ENCODE measurements at regions of chr10 and their contacts with region 1.

Region 1: DNA sequence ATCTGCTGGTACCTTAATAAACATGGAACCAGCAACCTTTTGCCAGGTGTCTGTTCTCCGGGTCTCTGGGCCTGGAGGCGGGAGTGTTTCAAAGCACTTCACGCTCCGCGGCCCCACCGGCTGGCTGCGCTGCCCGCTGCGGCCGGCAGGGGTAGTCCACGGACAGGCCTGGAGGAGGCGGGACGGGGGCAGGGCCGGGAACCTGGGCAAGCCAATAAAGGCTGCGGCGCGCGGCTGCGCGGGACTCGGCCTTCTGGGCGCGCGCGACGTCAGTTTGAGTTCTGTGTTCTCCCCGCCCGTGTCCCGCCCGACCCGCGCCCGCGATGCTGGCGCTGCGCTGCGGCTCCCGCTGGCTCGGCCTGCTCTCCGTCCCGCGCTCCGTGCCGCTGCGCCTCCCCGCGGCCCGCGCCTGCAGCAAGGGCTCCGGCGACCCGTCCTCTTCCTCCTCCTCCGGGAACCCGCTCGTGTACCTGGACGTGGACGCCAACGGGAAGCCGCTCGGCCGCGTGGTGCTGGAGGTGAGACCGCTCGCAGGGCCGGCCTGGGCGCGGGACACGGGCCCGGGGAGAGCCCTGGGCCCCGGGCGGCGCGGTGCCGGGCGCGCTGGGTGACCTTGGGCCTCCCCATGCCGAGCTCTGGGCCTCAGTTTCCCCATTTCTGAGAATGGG is at the start of gene PPIF:
- DNase-seq: peak; percentile 65
- ATAC-seq: peak; percentile 87
- H3K4me3 ChIP-seq: peak within 1 kb of the TSS; percentile 84
- H3K27ac ChIP-seq: peak within 1 kb of the TSS; percentile 92
- H3K4me1 ChIP-seq: peaks cover 12% of the 10 kb centered on the region
- H3K27me3 ChIP-seq: no peaks in the 10 kb centered on the region
- CTCF ChIP-seq: peak; percentile 92 to 94 (median 93)
- EP300 ChIP-seq: no peak
- POLR2A ChIP-seq: peak; percentile 89
- RAD21 ChIP-seq: 0 out of 2 replicates have a peak, but pooled peaks have one; percentile 46
- polyA plus RNA-seq, gene PPIF: 28.8 to 71.9 TPM

Region 2: DNA sequence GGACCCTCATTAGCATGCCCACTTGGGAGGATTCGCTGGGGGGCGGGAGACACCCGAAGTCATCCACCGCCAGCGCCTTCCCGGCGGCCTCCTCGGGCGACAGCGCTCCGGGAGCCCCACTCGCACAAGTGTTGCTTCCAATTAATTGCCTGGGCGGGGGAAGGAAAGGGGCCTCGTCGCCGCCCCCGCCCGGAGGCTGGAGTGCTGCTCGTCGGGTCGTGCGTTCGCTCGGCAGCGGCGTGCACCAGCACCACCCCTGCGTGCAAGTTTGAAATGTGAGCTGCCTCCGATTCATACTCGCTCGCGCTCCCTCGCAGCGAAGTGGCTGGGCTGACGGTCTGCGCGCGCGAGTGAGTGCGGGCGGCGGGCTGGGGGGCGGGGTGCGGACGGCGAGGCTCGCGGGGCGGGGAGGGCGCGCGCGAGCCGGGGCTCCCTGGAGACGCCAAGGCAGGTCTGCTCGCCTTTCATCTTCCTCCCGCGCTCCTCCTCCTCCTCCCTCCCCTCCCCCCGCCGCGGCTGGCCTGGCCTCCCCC is 104.7 kb before region 1 on chr10:
- CTCF ChIA-PET with region 1: interaction called, 11 read pairs
- POLR2A ChIA-PET with region 1: interaction called, 7 read pairs
- RAD21 ChIA-PET with region 1: interaction called, 36 read pairs
- SMC1A ChIA-PET with region 1: interaction called, 10 read pairs
- in situ Hi-C with region 1: no loop called
- intact Hi-C with region 1: loop called (anchors 2 kb)
- DNase-seq: no peak
- ATAC-seq: peak; percentile 39
- H3K4me3 ChIP-seq: peak overlapping the region; percentile 90
- H3K27ac ChIP-seq: peak overlapping the region; percentile 75
- H3K4me1 ChIP-seq: peaks cover 40% of the 10 kb centered on the region
- H3K27me3 ChIP-seq: no peaks in the 10 kb centered on the region
- CTCF ChIP-seq: no peak
- EP300 ChIP-seq: no peak
- POLR2A ChIP-seq: peak; percentile 86
- RAD21 ChIP-seq: no peak

Region 3: GRCh38 chr10:79286318-79286951 is 60.9 kb before region 1 on chr10:
- CTCF ChIA-PET with region 1: interaction called, 9 read pairs
- POLR2A ChIA-PET with region 1: interaction called, 5 read pairs
- RAD21 ChIA-PET with region 1: interaction called, 7 read pairs
- SMC1A ChIA-PET with region 1: interaction called, 10 read pairs
- in situ Hi-C with region 1: no loop called
- intact Hi-C with region 1: loop called (anchors 2 kb)
- DNase-seq: peak; percentile 92
- ATAC-seq: peak; percentile 86
- H3K4me3 ChIP-seq: peak overlapping the region; percentile 35; the same call in 1 of the 2 replicates
- H3K27ac ChIP-seq: peak overlapping the region; percentile 98
- H3K4me1 ChIP-seq: peaks cover 58% of the 10 kb centered on the region
- H3K27me3 ChIP-seq: no peaks in the 10 kb centered on the region
- CTCF ChIP-seq: no peak
- EP300 ChIP-seq: peak; percentile 91 to 95
- POLR2A ChIP-seq: peak; percentile 95
- RAD21 ChIP-seq: no peak

Region 4: DNA sequence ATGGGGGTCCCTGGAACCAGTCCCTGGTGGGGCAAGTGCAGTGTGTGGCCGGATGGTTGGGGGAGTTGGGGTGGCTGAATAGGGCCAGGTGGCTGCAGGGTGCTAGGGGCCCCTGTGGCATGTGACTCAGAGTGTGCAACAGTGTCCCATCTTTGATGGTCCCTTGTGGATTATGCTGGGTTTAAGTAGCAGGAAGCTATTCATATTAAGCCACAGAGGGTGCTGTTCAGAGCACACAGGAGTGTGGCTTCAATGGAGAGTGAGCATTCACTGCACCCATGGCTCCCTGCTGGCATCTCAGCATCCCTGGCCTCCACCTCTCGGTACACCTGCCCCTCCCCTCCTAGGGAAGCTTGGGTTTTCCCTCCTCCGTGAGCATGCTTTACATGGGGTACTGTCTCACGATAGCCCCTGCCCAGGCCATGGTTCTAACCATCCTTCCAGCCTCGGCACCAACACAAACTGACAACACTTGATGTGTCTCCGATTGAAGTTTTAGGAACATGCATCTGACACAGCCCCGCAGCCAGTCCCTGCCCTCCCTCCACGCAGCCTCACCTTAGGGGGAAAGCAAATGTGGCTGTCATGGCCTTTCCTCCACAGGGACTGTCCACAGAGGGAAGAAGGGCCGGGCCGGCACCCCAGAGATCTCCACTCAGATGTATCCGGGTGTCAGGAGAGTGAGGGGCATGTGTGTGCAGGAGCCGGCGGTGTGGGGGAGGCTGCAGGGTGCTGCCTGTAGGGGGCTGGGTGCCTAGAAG is 30.5 kb before region 1 on chr10:
- CTCF ChIA-PET with region 1: interaction called, 14 read pairs
- POLR2A ChIA-PET with region 1: interaction called, 8 read pairs
- RAD21 ChIA-PET with region 1: interaction called, 14 read pairs
- SMC1A ChIA-PET with region 1: interaction called, 18 read pairs
- in situ Hi-C with region 1: no loop called
- intact Hi-C with region 1: loop called (anchors 1 kb)
- DNase-seq: peak; percentile 56
- ATAC-seq: peak; percentile 82
- H3K4me3 ChIP-seq: peak overlapping the region; percentile 37; the same call in 1 of the 2 replicates
- H3K27ac ChIP-seq: peak overlapping the region; percentile 62
- H3K4me1 ChIP-seq: peaks cover 33% of the 10 kb centered on the region
- H3K27me3 ChIP-seq: no peaks in the 10 kb centered on the region
- CTCF ChIP-seq: peak; percentile 12 to 35 (median 28); a peak in 4 of 6 replicates
- EP300 ChIP-seq: peak in 1 of 2 experiments; percentile 50; a peak in 1 of 4 replicates
- POLR2A ChIP-seq: peak; percentile 56; the same call in 1 of the 2 replicates
- RAD21 ChIP-seq: 0 out of 2 replicates have a peak, but pooled peaks have one; percentile 6

Region 5: GRCh38 chr10:79322616-79323543 is 24.5 kb before region 1 on chr10:
- CTCF ChIA-PET with region 1: interaction called, 18 read pairs
- POLR2A ChIA-PET with region 1: interaction called, 7 read pairs
- RAD21 ChIA-PET with region 1: interaction called, 4 read pairs
- SMC1A ChIA-PET with region 1: interaction called, 18 read pairs
- in situ Hi-C with region 1: no loop called
- intact Hi-C with region 1: no loop called
- DNase-seq: peak; percentile 46
- ATAC-seq: peak; percentile 74
- H3K4me3 ChIP-seq: no peak overlapping the region
- H3K27ac ChIP-seq: peak overlapping the region; percentile 48
- H3K4me1 ChIP-seq: peaks cover 44% of the 10 kb centered on the region
- H3K27me3 ChIP-seq: no peaks in the 10 kb centered on the region
- CTCF ChIP-seq: no peak
- EP300 ChIP-seq: 0 out of 4 replicates have a peak, but pooled peaks of 1 of the 2 experiments have one; percentile 28
- POLR2A ChIP-seq: no peak
- RAD21 ChIP-seq: no peak

Region 6: GRCh38 chr10:79331709-79332108 is 15.7 kb before region 1 on chr10:
- CTCF ChIA-PET with region 1: interaction called, 27 read pairs
- POLR2A ChIA-PET with region 1: interaction called, 15 read pairs
- RAD21 ChIA-PET with region 1: interaction called, 6 read pairs
- SMC1A ChIA-PET with region 1: interaction called, 14 read pairs
- in situ Hi-C with region 1: no loop called
- intact Hi-C with region 1: no loop called
- DNase-seq: peak; percentile 81
- ATAC-seq: peak; percentile 94
- H3K4me3 ChIP-seq: no peak overlapping the region
- H3K27ac ChIP-seq: peak overlapping the region; percentile 62
- H3K4me1 ChIP-seq: peaks cover 20% of the 10 kb centered on the region
- H3K27me3 ChIP-seq: no peaks in the 10 kb centered on the region
- CTCF ChIP-seq: no peak
- EP300 ChIP-seq: peak in 1 of 2 experiments; percentile 61; a peak in 1 of 4 replicates
- POLR2A ChIP-seq: peak; percentile 76
- RAD21 ChIP-seq: no peak

Region 7: DNA sequence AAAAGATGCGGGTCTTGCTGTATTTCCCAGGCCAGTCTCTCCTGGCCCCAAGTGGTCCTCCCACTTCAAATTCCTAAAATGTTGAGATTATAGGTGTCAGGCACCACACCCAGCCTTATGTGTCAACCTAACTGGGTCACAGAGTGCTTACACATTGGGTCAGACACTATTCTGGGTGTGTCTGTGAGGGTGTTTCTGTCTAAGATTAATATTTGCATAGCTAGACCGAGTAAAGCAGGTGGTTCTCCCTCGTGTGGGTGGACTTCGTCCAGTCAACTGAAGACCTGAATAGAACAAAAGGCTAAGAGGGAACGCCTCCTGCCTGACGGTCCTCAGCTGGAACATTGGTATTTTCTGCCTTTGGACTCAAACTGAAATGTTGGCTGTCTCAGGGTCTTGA is 11.4 kb after region 1 on chr10:
- CTCF ChIA-PET with region 1: interaction called, 14 read pairs
- POLR2A ChIA-PET with region 1: no interaction called
- RAD21 ChIA-PET with region 1: no interaction called
- SMC1A ChIA-PET with region 1: interaction called, 3 read pairs
- in situ Hi-C with region 1: no loop called
- intact Hi-C with region 1: no loop called
- DNase-seq: no peak
- ATAC-seq: peak; percentile 56
- H3K4me3 ChIP-seq: no peak overlapping the region
- H3K27ac ChIP-seq: no peak overlapping the region
- H3K4me1 ChIP-seq: peaks cover 16% of the 10 kb centered on the region
- H3K27me3 ChIP-seq: no peaks in the 10 kb centered on the region
- CTCF ChIP-seq: no peak
- EP300 ChIP-seq: no peak
- POLR2A ChIP-seq: no peak
- RAD21 ChIP-seq: no peak